ENCODE measurements at regions of chr1 and their contacts with region 1.

Region 1: DNA sequence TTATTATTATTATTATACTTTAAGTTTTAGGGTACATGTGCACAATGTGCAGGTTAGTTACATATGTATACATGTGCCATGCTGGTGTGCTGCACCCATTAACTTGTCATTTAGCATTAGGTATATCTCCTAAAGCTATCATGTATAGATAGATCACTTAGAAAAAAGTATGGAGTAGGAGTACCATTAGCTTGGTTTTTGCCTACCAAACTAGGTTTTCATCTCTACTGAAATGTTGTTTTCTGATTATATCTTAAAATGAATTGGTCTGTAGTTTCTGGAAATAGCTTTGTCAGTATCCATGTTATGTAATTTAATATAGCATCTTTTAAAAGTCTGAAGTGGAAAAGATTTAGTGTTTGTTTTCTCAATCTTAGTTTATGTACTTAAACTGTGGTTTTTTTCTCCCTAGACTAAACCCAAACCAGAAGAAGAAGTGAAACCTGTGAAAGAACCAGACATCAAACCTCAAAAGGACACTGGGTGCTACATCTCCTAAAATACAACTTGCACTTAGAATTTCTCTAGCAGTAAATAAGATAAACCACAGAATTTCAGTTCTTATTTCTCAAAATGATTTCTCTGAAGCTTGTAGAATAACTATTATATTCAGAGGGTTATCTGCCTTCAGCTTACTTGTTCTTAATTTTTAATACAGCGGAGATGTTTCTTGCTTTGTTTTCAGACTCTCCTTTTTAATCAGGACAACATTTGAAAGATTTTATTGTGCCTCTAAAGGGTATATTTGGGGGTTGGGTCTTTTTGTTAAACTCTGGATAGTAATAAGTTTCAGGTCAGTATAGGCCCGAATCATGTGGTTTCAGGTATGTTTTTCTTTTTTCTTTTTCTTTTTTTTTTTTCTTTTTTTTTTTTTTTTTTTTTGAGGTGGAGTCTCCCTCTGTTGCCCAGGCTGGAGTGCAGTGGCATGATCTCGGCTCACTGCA is 4.5 kb upstream of the FAM177B start:
- DNase-seq: no peak
- ATAC-seq: peak; percentile 88
- H3K4me3 Mint-ChIP-seq: peak overlapping the region; percentile 77
- H3K27ac Mint-ChIP-seq: peak overlapping the region; percentile 95
- H3K4me1 Mint-ChIP-seq: peaks cover 64% of the 10 kb centered on the region
- H3K27me3 Mint-ChIP-seq: no peaks in the 10 kb centered on the region
- CTCF ChIP-seq: no peak

Region 2: DNA sequence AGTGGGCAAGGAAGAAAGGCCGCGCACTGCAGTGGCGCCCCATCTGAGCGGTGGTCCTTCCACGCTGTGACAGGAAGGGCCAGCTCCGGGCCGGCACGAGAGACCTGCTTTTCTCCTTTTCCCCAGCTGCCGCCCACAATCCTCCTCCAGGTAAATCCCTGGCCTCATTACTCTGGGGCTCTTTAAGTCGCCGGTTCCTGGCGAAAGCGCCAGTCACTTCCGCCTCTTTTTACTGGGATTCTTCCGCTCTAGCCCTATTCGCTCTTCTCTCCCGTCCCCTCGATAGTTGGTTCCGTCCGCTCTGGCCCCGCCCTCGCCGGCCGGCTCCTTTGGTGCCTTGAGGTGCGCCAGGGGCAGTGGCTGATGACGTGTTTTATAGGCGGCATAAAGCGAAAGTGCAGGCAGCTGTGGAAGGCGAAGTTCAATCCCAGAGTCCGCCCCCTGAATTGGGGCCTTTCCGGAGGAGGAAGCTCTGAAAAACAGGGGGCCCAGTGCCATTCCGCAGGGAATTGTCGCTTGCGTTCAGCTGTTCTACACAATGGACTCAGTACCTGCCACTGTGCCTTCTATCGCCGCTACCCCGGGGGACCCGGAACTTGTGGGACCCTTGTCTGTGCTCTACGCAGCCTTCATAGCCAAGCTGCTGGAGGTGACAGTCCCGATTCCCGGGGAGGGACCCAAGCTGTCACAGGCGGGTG is 88.4 kb before region 1 on chr1:
- CTCF ChIA-PET with region 1: no interaction called
- POLR2A ChIA-PET with region 1: interaction called, 9 read pairs
- intact Hi-C with region 1: loop called (anchors 5 kb)
- DNase-seq: peak; percentile 94
- ATAC-seq: peak; percentile 96
- H3K4me3 Mint-ChIP-seq: peak overlapping the region; percentile 100
- H3K27ac Mint-ChIP-seq: peak overlapping the region; percentile 99
- H3K4me1 Mint-ChIP-seq: peaks cover 25% of the 10 kb centered on the region
- H3K27me3 Mint-ChIP-seq: no peaks in the 10 kb centered on the region
- CTCF ChIP-seq: no peak

Region 3: DNA sequence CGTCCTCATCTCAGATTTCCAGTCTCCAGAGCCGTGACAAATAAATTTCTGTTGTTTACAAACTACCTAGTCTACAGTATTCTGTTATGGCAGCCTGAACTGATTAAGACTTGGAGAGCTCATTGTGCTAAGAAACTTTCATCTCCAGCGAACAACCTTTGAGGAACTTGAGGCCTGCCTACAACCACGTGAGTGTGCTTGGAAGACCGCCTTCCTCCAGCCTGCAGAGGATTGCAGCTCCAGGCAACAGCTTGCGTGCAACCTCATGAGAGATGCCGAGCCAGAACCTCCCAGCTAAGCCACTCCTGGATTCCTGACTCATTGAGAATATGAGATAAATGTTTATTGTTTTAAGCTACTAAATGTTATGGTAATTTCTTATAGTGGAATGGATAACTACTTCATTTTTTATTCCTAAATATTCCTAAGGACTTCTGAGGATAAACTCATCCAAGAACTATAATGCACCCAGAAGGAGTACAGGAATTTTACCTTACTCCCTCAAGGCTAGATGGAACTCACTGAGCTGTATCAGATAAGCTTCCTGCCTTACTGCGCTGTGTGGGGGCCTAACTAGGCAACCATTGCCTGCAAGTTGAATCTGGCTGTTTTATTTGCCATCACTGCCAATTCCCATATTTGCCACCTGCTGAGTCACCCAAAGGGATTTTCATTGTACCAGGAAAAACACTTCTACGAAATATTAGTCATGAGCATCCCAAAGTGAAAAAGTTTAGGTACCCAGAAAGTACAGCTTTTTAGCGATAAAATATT is 22.1 kb after region 1 on chr1:
- CTCF ChIA-PET with region 1: interaction called, 14 read pairs
- POLR2A ChIA-PET with region 1: interaction called, 16 read pairs
- intact Hi-C with region 1: loop called (anchors 2 kb)
- DNase-seq: no peak
- ATAC-seq: no peak
- H3K4me3 Mint-ChIP-seq: no peak overlapping the region
- H3K27ac Mint-ChIP-seq: peak overlapping the region; percentile 61
- H3K4me1 Mint-ChIP-seq: peaks cover 65% of the 10 kb centered on the region
- H3K27me3 Mint-ChIP-seq: no peaks in the 10 kb centered on the region
- CTCF ChIP-seq: no peak

Region 4: DNA sequence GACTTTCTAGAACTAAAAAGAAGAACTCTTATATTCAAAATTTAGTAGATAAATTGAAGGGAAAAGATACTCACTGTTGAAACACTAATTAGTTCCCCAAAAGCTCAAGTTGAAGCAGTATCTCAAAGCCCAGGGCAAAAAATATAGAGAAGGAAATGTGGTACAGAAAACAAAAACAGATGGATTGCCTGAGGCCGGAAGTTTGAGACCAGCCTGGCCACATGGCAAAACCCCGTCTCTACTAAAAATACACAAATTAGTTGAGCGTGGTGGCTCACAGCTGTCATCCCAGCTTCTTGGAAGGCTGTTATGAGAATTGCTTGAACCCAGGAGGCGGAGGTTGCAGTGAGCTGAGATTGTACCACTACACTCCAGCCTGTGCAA is 40.5 kb after region 1 on chr1:
- CTCF ChIA-PET with region 1: interaction called, 6 read pairs
- POLR2A ChIA-PET with region 1: interaction called, 19 read pairs
- intact Hi-C with region 1: loop called (anchors 1 kb)
- DNase-seq: peak; percentile 33
- ATAC-seq: peak; percentile 66
- H3K4me3 Mint-ChIP-seq: peak overlapping the region; percentile 57
- H3K27ac Mint-ChIP-seq: peak overlapping the region; percentile 89
- H3K4me1 Mint-ChIP-seq: peaks cover 49% of the 10 kb centered on the region
- H3K27me3 Mint-ChIP-seq: no peaks in the 10 kb centered on the region
- CTCF ChIP-seq: no peak

Region 5: DNA sequence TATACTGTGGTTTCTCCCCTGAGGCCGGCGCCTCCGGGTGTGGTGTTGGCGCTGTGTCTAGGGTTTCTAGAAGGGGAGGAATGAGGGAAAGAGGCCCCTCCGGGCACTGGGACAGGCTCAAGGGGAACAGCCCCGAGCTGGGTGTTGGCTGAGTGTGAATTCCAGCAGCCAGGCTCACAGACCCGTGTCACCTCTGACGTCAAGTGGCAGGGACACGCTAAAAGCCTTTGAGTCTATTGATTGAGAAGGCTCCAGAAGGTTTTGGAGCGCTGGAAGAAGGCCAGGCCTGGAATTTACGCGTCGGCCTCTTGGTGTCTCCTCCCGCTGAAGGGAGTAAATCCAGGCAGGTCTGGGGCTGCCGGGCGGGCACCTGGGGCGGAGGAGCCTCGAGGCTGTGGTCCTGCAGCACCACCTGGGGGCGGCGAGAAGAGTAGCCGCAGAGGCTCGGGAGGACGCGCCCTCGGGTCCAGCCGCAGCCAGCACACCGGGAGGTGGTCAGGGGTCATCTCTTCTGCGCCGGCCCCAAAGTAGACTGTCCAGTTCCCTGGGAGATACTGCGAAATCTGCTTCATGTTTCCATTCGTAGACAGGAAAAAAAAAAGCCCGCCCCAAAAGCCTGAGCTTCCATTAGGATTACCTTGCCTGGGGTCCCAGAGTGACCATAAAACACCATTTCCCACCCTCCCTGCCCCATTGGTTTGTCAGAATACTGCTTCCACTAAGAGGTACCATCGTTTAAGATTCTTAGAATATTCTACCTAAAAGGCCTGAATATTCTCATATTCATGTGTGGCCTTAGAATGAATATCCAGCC is 348.9 kb after region 1 on chr1:
- CTCF ChIA-PET with region 1: interaction called, 10 read pairs
- POLR2A ChIA-PET with region 1: no interaction called
- intact Hi-C with region 1: loop called (anchors 1 kb)
- DNase-seq: peak; percentile 71
- ATAC-seq: peak; percentile 99
- H3K4me3 Mint-ChIP-seq: peak overlapping the region; percentile 83
- H3K27ac Mint-ChIP-seq: peak overlapping the region; percentile 80
- H3K4me1 Mint-ChIP-seq: peaks cover 3% of the 10 kb centered on the region
- H3K27me3 Mint-ChIP-seq: peaks cover 5% of the 10 kb centered on the region
- CTCF ChIP-seq: peak; percentile 92

Region 6: GRCh38 chr1:223087291-223088255 is 355.1 kb after region 1 on chr1:
- CTCF ChIA-PET with region 1: interaction called, 15 read pairs
- POLR2A ChIA-PET with region 1: no interaction called
- intact Hi-C with region 1: no loop called
- DNase-seq: no peak
- ATAC-seq: no peak
- H3K4me3 Mint-ChIP-seq: no peak overlapping the region
- H3K27ac Mint-ChIP-seq: no peak overlapping the region
- H3K4me1 Mint-ChIP-seq: no peaks in the 10 kb centered on the region
- H3K27me3 Mint-ChIP-seq: peaks cover 1% of the 10 kb centered on the region
- CTCF ChIP-seq: no peak

Measured in activated B cell treated with CpG ODN at 0.5 μM for 24 hours (primary cell).